Activated T-helper 2 cell treated with anti-CD3 and anti-CD28 coated beads, Interferon-gamma antibody, Interleukin-2, Interleukin-4, amounts not matched to agents 10 μg/mL and 5 μg/mL and 100 μg/mL, durations not matched to agents 14 hours and 24 hours and 36 hours (primary cell): ENCODE measurements at regions of chr17 and their contacts with region 1.

Region 1: GRCh38 chr17:43330876-43331639 is 67.7 kb upstream of the ARL4D start:
- DNase-seq: no peak
- H3K4me3 Mint-ChIP-seq: no peak overlapping the region
- H3K27ac Mint-ChIP-seq: no peak overlapping the region
- H3K4me1 Mint-ChIP-seq: peaks cover 30% of the 10 kb centered on the region
- H3K27me3 Mint-ChIP-seq: peaks cover 22% of the 10 kb centered on the region

Region 2: DNA sequence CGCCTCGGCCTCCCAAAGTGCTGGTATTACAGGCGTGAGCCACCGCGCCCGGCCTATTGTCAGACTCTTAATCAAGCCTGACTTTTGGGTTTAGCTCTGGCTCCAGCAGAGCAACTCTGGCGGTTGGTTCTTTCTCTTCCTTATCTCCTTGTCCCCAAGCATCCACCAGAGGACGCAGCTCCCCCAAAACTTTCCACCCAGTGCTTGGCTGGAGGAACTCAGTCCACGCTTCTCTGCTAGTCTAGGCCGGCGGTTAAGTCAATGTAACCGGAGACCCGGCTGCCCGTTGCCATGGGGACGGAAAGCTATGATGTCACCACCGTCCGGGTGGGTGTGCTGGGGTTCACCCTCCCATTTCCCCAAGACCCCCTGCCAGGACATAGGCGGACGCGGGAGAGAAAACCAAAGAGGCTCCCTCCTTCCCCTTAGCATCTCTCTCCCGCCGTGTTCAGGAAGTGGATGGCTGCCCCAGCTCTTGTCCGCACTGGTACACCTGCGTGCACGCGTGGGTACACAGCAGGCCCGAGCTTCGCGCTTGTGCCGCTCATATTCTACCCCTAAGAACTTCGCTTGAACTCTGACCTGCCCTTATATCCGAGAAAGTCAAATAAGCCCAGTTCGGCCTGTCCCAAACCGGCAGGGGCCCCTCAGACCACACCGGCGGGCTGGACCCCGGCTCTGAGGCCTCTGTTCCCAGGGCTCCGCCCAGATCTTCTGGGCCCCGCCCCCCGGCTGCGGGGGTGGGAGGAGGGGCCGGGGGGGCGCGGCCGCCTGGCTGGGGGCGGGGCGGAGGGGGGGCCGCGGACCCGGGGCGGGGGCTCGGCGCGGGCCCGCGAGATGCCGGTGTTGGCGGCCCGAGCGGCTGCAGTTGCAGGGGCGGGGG is 306.4 kb before region 1 on chr17 and contains the start of gene RND2:
- intact Hi-C with region 1: loop called (anchors 5 kb)
- DNase-seq: peak; percentile 69
- H3K4me3 Mint-ChIP-seq: peak within 1 kb of the TSS; percentile 90
- H3K27ac Mint-ChIP-seq: peak within 1 kb of the TSS; percentile 84
- H3K4me1 Mint-ChIP-seq: peaks cover 16% of the 10 kb centered on the region
- H3K27me3 Mint-ChIP-seq: peaks cover 11% of the 10 kb centered on the region
- total RNA-seq, gene RND2: 0.05 TPM in 1 of 2 replicates, not detected in the other

Region 3: GRCh38 chr17:43314611-43315011 is 16.4 kb before region 1 on chr17:
- intact Hi-C with region 1: loop called (anchors 1 kb)
- DNase-seq: no peak
- H3K4me3 Mint-ChIP-seq: no peak overlapping the region
- H3K27ac Mint-ChIP-seq: no peak overlapping the region
- H3K4me1 Mint-ChIP-seq: peaks cover 8% of the 10 kb centered on the region
- H3K27me3 Mint-ChIP-seq: no peaks in the 10 kb centered on the region

Region 4: DNA sequence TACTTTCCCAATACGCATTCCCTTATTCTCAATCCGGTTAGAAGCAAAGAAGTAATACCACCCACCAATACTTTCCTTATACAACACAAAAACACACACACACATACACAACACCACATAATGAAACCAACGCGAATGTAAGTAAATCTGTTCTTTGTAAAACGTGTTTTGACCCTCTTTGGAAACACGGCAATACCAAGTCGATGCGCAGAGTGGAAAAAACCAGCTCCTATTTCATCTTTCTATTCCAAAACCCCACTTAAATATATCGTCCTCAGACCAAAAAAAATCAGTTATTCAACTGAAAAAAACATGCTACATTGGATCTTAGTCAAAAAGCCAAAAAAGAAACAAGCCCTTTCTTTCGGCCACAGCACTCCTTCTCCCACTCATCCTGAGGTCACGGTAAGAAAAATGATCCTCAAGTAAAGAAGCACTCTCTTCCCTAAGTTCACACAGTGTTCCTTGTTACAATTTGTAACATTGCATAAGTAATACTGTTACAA is 36.7 kb after region 1 on chr17:
- intact Hi-C with region 1: loop called (anchors 5 kb)
- DNase-seq: peak; percentile 57
- H3K4me3 Mint-ChIP-seq: peak overlapping the region; percentile 86
- H3K27ac Mint-ChIP-seq: peak overlapping the region; percentile 100
- H3K4me1 Mint-ChIP-seq: peaks cover 54% of the 10 kb centered on the region
- H3K27me3 Mint-ChIP-seq: no peaks in the 10 kb centered on the region